Heart left ventricle (tissue), 16 donors: ENCODE measurements at regions of chr20 and their contacts with region 1.

Region 1: GRCh38 chr20:6767536-6768227 is at the start of gene BMP2:
- DNase-seq: peak; percentile 55 to 76 (median 63)
- ATAC-seq: peak; percentile 58 to 85 (median 76)
- H3K4me3 ChIP-seq: peak within 1 kb of the TSS; percentile 59 to 89 (median 75)
- H3K27ac ChIP-seq: peak within 1 kb of the TSS; percentile 19 to 82 (median 63)
- H3K4me1 ChIP-seq: peaks cover 0 to 28% (median 8%) of the 10 kb centered on the region in 12 donors
- H3K27me3 ChIP-seq: peaks cover 0 to 47% (median 0%) of the 10 kb centered on the region in 9 donors
- CTCF ChIP-seq: peak in 1 of 12 donors; percentile 3
- POLR2A ChIP-seq: no peak
- total RNA-seq, gene BMP2: 0.72 to 6.2 (median 2.3) TPM

Region 2: GRCh38 chr20:6265204-6265904 is 502.3 kb before region 1 on chr20:
- intact Hi-C with region 1: loop called in 2 of 10 experiments (anchors 5 to 10 kb)
- DNase-seq: peak in 1 of 5 donors; percentile 22
- ATAC-seq: peak in 3 of 4 donors; percentile 65 to 87 (median 83)
- H3K4me3 ChIP-seq: peak overlapping the region in 5 of 12 donors; percentile 8 to 37 (median 16)
- H3K27ac ChIP-seq: peak overlapping the region in 9 of 12 donors; percentile 3 to 57 (median 17)
- H3K4me1 ChIP-seq: peaks cover 0 to 10% (median 3%) of the 10 kb centered on the region in 12 donors
- H3K27me3 ChIP-seq: no peaks in the 10 kb centered on the region
- CTCF ChIP-seq: peak in 11 of 12 donors; percentile 9 to 65 (median 34)
- POLR2A ChIP-seq: no peak

Region 3: GRCh38 chr20:6819605-6820004 is 51.9 kb after region 1 on chr20:
- intact Hi-C with region 1: no loop called
- DNase-seq: no peak
- ATAC-seq: no peak
- H3K4me3 ChIP-seq: no peak overlapping the region
- H3K27ac ChIP-seq: no peak overlapping the region
- H3K4me1 ChIP-seq: no peaks in the 10 kb centered on the region
- H3K27me3 ChIP-seq: peaks cover 0 to 31% (median 8%) of the 10 kb centered on the region in 9 donors
- CTCF ChIP-seq: peak in 4 of 12 donors; percentile 27 to 36 (median 34)
- POLR2A ChIP-seq: no peak

Region 4: GRCh38 chr20:7113577-7114466 is 346.1 kb after region 1 on chr20:
- intact Hi-C with region 1: loop called in 1 of 10 experiments (anchors 5 kb)
- DNase-seq: peak; percentile 40 to 65 (median 51)
- ATAC-seq: peak; percentile 83 to 98 (median 94)
- H3K4me3 ChIP-seq: no peak overlapping the region
- H3K27ac ChIP-seq: no peak overlapping the region
- H3K4me1 ChIP-seq: no peaks in the 10 kb centered on the region
- H3K27me3 ChIP-seq: no peaks in the 10 kb centered on the region
- CTCF ChIP-seq: peak; percentile 37 to 68 (median 50)
- POLR2A ChIP-seq: no peak

Region 5: GRCh38 chr20:7272512-7272911 is 504.8 kb after region 1 on chr20:
- intact Hi-C with region 1: no loop called
- DNase-seq: no peak
- ATAC-seq: no peak
- H3K4me3 ChIP-seq: no peak overlapping the region
- H3K27ac ChIP-seq: no peak overlapping the region
- H3K4me1 ChIP-seq: no peaks in the 10 kb centered on the region
- H3K27me3 ChIP-seq: peaks cover 0 to 5% (median 0%) of the 10 kb centered on the region in 9 donors
- CTCF ChIP-seq: peak in 9 of 12 donors; percentile 7 to 47 (median 25)
- POLR2A ChIP-seq: no peak

Region 6: GRCh38 chr20:7291946-7292345 is 524.3 kb after region 1 on chr20:
- intact Hi-C with region 1: loop called in 5 of 10 experiments (anchors 2 to 10 kb)
- DNase-seq: no peak
- ATAC-seq: no peak
- H3K4me3 ChIP-seq: no peak overlapping the region
- H3K27ac ChIP-seq: no peak overlapping the region
- H3K4me1 ChIP-seq: no peaks in the 10 kb centered on the region
- H3K27me3 ChIP-seq: peaks cover 0 to 3% (median 0%) of the 10 kb centered on the region in 9 donors
- CTCF ChIP-seq: no peak
- POLR2A ChIP-seq: no peak

Region 7: GRCh38 chr20:7866285-7866684 is 1098.6 kb after region 1 on chr20:
- intact Hi-C with region 1: loop called in 2 of 10 experiments (anchors 10 kb)
- DNase-seq: no peak
- ATAC-seq: peak in 2 of 4 donors; percentile 26 to 39
- H3K4me3 ChIP-seq: peak overlapping the region in 4 of 12 donors; percentile 5 to 32 (median 10)
- H3K27ac ChIP-seq: peak overlapping the region in 1 of 12 donors; percentile 22
- H3K4me1 ChIP-seq: no peaks in the 10 kb centered on the region
- H3K27me3 ChIP-seq: peaks cover 0 to 5% (median 0%) of the 10 kb centered on the region in 9 donors
- CTCF ChIP-seq: no peak
- POLR2A ChIP-seq: no peak

Region 8: GRCh38 chr20:8709627-8710026 is 1941.9 kb after region 1 on chr20:
- intact Hi-C with region 1: no loop called
- DNase-seq: no peak
- ATAC-seq: no peak
- H3K4me3 ChIP-seq: no peak overlapping the region
- H3K27ac ChIP-seq: no peak overlapping the region
- H3K4me1 ChIP-seq: peaks cover 0 to 4% (median 0%) of the 10 kb centered on the region in 12 donors
- H3K27me3 ChIP-seq: no peaks in the 10 kb centered on the region
- CTCF ChIP-seq: no peak
- POLR2A ChIP-seq: no peak